ENCODE measurements at regions of chr16 and their contacts with region 1.

Region 1: DNA sequence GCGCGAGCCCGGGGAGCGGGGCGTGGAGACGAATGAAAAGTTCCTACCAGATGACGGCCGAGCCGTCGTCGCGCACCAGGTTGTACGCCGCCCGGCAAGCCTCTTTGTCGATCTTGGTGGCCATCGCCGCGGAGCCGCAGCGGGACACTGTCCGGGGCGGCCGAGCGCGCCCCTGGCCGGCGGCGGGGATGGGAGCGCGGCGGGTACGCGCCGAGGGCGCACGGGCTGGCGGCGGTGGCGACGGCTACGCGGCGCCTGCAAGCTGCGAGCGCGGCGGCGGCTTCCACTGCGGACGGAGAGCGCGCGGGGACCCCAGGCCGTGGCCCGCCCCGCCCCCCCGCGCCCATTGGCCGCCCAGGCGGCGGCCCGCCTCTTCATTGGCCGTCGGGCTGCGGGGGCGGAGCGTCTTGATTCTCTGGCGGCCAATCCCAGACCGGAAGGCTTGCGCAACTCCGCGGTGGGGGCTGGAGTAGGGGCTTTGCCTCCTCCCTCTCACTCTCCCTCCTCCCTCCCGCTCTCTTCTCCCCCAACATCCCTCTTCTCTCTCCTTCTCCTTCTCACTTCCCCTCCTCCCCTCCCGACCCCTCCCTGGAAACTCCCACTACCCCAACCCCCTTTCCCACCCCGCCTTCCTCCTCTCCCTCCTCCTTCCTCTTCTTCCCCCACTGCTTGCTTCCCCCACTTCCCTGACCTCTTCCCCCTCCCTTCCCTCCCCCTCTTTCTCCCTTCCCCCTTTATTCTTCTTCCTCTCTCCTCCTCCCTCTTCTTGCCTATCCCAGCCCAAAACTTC is at the start of gene COTL1:
- DNase-seq: peak; percentile 87 to 97 (median 94)
- ATAC-seq: peak; percentile 84
- H3K4me3 ChIP-seq: peak within 1 kb of the TSS; percentile 80
- H3K4me3 Mint-ChIP-seq: peak within 1 kb of the TSS; percentile 89
- H3K27ac ChIP-seq: peak within 1 kb of the TSS; percentile 24 to 57
- H3K27ac Mint-ChIP-seq: peak within 1 kb of the TSS; percentile 82
- H3K4me1 ChIP-seq: peaks cover 47% of the 10 kb centered on the region
- H3K4me1 Mint-ChIP-seq: peaks cover 49% of the 10 kb centered on the region
- H3K27me3 ChIP-seq: no peaks in the 10 kb centered on the region
- H3K27me3 Mint-ChIP-seq: no peaks in the 10 kb centered on the region
- CTCF ChIP-seq: no peak
- total RNA-seq, gene COTL1: 179 to 181 TPM

Region 2: GRCh38 chr16:84277237-84277823 is 340.7 kb before region 1 on chr16:
- CTCF ChIA-PET with region 1: no interaction called
- POLR2A ChIA-PET with region 1: no interaction called
- intact Hi-C with region 1: loop called (anchors 2 to 5 kb)
- DNase-seq: peak; percentile 50 to 83 (median 68)
- ATAC-seq: peak; percentile 69
- H3K4me3 ChIP-seq: no peak overlapping the region
- H3K4me3 Mint-ChIP-seq: no peak overlapping the region
- H3K27ac ChIP-seq: no peak overlapping the region
- H3K27ac Mint-ChIP-seq: no peak overlapping the region
- H3K4me1 ChIP-seq: peaks cover 3% of the 10 kb centered on the region
- H3K4me1 Mint-ChIP-seq: no peaks in the 10 kb centered on the region
- H3K27me3 ChIP-seq: peaks cover 0 to 3% of the 10 kb centered on the region in 2 experiments
- H3K27me3 Mint-ChIP-seq: peaks cover 6% of the 10 kb centered on the region
- CTCF ChIP-seq: peak; percentile 92

Region 3: GRCh38 chr16:84511180-84511824 is 106.7 kb before region 1 on chr16:
- CTCF ChIA-PET with region 1: interaction called, 32 read pairs
- POLR2A ChIA-PET with region 1: interaction called, 20 read pairs
- intact Hi-C with region 1: loop called (anchors 1 kb)
- DNase-seq: peak; percentile 77 to 95 (median 85)
- ATAC-seq: peak; percentile 17
- H3K4me3 ChIP-seq: no peak overlapping the region
- H3K4me3 Mint-ChIP-seq: peak overlapping the region; percentile 69
- H3K27ac ChIP-seq: no peak overlapping the region
- H3K27ac Mint-ChIP-seq: peak overlapping the region; percentile 80
- H3K4me1 ChIP-seq: peaks cover 91% of the 10 kb centered on the region
- H3K4me1 Mint-ChIP-seq: peaks cover 71% of the 10 kb centered on the region
- H3K27me3 ChIP-seq: no peaks in the 10 kb centered on the region
- H3K27me3 Mint-ChIP-seq: no peaks in the 10 kb centered on the region
- CTCF ChIP-seq: peak; percentile 93

Region 4: GRCh38 chr16:84585886-84586285 is 32.1 kb before region 1 on chr16:
- CTCF ChIA-PET with region 1: interaction called, 6 read pairs
- POLR2A ChIA-PET with region 1: no interaction called
- intact Hi-C with region 1: loop called (anchors 5 kb)
- DNase-seq: no peak
- ATAC-seq: no peak
- H3K4me3 ChIP-seq: no peak overlapping the region
- H3K4me3 Mint-ChIP-seq: no peak overlapping the region
- H3K27ac ChIP-seq: no peak overlapping the region
- H3K27ac Mint-ChIP-seq: peak overlapping the region; percentile 52
- H3K4me1 ChIP-seq: peaks cover 27% of the 10 kb centered on the region
- H3K4me1 Mint-ChIP-seq: peaks cover 40% of the 10 kb centered on the region
- H3K27me3 ChIP-seq: no peaks in the 10 kb centered on the region
- H3K27me3 Mint-ChIP-seq: no peaks in the 10 kb centered on the region
- CTCF ChIP-seq: no peak

Region 5: GRCh38 chr16:84599521-84600202 is 18.3 kb before region 1 on chr16:
- CTCF ChIA-PET with region 1: interaction called, 19 read pairs
- POLR2A ChIA-PET with region 1: interaction called, 135 read pairs
- intact Hi-C with region 1: loop called (anchors 1 to 2 kb)
- DNase-seq: peak in 7 of 14 experiments; percentile 35 to 73 (median 58)
- ATAC-seq: peak; percentile 24
- H3K4me3 ChIP-seq: peak overlapping the region; percentile 46
- H3K4me3 Mint-ChIP-seq: peak overlapping the region; percentile 86
- H3K27ac ChIP-seq: peak overlapping the region; percentile 82 to 85
- H3K27ac Mint-ChIP-seq: peak overlapping the region; percentile 96
- H3K4me1 ChIP-seq: peaks cover 95% of the 10 kb centered on the region
- H3K4me1 Mint-ChIP-seq: peaks cover 80% of the 10 kb centered on the region
- H3K27me3 ChIP-seq: no peaks in the 10 kb centered on the region
- H3K27me3 Mint-ChIP-seq: no peaks in the 10 kb centered on the region
- CTCF ChIP-seq: no peak

Region 6: DNA sequence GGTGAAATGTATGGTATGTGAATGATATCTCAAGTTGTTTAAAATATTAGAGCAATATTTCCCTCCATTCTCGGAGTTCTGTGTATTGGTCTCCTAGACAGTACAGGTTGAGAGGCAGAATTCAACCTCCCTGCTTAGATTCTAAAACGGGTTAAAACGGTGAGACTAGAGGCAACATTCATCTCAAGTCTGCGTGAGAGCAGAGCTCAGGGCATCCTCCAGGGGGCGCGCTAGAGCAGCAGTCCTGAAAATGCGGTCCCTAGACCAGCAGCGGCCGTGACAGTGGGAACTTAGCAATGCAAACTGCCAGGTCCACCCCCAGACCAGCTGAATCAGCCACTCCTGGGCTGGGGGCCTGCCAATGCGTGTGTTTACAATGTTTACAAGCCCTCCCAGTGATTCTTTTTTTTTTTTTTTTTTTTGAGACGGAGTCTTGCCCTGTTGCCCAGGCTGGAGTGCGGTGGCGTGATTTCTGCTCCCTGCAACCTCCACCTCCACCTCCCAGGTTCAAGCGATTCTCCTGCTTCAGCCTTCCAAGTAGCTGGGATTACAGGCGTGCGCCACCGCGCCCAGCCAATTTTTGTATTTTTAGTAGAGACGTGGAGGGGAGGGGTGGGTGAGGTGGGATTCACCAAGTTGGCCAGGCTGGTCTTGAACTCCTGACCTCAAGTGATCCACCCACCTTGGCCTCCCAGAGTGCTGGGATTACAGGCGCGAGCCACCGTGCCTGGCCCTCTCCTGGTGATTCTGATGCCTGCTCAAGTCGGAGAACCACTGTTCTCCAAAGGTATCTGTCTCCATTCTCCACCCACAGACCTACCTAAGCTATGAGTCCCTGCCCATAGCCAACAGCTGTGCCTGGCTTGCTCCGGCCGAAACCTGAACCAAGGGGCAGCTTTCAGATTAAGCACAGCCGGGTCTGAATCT is 54.6 kb after region 1 on chr16:
- CTCF ChIA-PET with region 1: interaction called, 4 read pairs
- POLR2A ChIA-PET with region 1: interaction called, 4 read pairs
- intact Hi-C with region 1: loop called in 1 of 2 experiments (anchors 5 kb)
- DNase-seq: peak; percentile 68 to 90 (median 78)
- ATAC-seq: peak; percentile 96
- H3K4me3 ChIP-seq: no peak overlapping the region
- H3K4me3 Mint-ChIP-seq: no peak overlapping the region
- H3K27ac ChIP-seq: no peak overlapping the region
- H3K27ac Mint-ChIP-seq: no peak overlapping the region
- H3K4me1 ChIP-seq: peaks cover 6% of the 10 kb centered on the region
- H3K4me1 Mint-ChIP-seq: peaks cover 10% of the 10 kb centered on the region
- H3K27me3 ChIP-seq: no peaks in the 10 kb centered on the region
- H3K27me3 Mint-ChIP-seq: no peaks in the 10 kb centered on the region
- CTCF ChIP-seq: peak; percentile 98

Region 7: DNA sequence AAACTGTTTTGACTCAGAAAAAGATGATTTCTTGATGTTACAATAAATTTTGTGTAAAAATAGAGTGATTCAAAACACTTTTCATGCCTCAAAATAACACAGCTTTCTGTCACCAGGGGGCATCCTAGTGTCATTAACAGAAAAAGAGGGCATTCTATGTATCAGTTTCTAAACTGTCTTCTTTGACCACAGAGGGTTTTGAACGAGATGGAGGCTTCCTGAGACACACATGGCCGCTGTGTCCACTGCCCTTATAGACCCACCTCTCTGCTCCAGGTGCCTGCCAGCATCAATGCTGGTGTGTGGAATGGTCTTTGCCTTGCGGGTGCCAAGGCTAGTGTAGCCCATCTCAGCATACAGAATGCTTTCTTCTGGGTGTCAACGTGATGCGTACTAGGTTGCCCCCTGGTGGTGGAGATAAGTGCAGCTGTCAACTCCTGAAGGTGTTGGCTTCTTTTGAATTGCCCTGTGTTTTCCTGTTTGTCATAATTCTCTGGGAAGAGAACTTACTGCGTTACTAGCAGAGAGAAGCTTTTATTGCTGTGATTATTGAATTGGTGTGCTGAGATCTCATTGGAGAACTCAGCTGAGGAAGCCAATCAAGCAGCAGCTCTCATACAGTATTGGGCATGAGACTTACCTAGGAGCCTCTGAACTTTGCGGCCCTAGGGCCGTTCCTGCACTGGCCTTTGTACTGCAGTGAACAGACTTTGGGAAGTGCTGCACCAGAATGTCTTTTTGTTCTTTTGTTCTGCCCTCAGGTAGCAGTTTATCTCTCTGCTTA is 120.5 kb after region 1 on chr16:
- CTCF ChIA-PET with region 1: interaction called, 19 read pairs
- POLR2A ChIA-PET with region 1: interaction called, 3 read pairs
- intact Hi-C with region 1: no loop called
- DNase-seq: peak; percentile 62 to 90 (median 66)
- ATAC-seq: peak; percentile 73
- H3K4me3 ChIP-seq: no peak overlapping the region
- H3K4me3 Mint-ChIP-seq: peak overlapping the region; percentile 3
- H3K27ac ChIP-seq: no peak overlapping the region
- H3K27ac Mint-ChIP-seq: peak overlapping the region; percentile 25
- H3K4me1 ChIP-seq: peaks cover 40% of the 10 kb centered on the region
- H3K4me1 Mint-ChIP-seq: peaks cover 37% of the 10 kb centered on the region
- H3K27me3 ChIP-seq: no peaks in the 10 kb centered on the region
- H3K27me3 Mint-ChIP-seq: no peaks in the 10 kb centered on the region
- CTCF ChIP-seq: peak; percentile 95